MCF 10A (cell line): ENCODE measurements at regions of chr2 and their contacts with region 1.

Region 1: DNA sequence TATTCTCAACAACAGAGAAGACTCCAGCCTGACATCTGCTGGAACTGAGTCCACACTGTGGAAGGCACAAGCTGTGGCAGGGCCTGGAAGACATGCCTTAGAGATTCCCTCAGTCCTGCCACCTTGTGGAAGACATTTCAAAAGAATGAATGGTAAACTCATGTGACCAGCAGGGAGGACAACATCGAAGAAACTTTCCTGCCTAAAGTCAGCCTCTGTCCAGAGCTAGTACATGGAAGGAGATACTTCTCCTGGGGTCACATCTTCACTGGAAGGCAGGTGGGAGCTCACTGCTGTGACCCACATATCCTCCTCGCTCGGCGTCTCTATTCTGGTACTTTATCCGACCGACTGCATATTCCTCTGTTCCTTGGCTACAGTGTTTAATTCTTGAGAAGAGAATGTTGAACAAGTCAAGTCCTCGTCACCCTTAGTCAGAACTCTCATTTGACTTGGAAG is 59.5 kb downstream of the PUM2 start:
- DNase-seq: peak; percentile 88
- H3K4me3 Mint-ChIP-seq: no peak overlapping the region
- H3K27ac Mint-ChIP-seq: peak overlapping the region; percentile 9
- H3K4me1 Mint-ChIP-seq: peaks cover 6% of the 10 kb centered on the region
- H3K27me3 Mint-ChIP-seq: no peaks in the 10 kb centered on the region
- CTCF ChIP-seq: peak; percentile 64

Region 2: DNA sequence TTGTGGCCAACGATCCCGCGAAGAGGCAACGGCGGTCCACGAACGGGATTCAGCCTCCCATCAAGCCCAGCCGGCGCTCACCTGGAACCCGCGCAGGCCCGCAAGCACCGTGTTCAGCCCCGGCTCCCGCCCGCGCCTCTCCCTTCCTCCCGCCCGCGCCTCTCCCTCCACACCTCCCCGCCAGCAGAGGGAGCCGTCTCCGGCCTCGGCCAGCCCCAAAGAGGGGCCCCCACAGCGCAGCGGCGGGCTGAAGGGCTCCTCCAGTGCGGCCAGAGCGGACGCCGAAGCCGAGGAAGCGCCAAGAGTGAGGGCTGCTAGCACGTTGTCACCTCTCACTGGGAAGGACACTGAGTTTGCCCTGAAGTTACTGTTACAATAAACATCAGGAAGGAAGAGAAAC is 184.4 kb before region 1 on chr2:
- CTCF ChIA-PET with region 1: interaction called, 78 read pairs
- POLR2A ChIA-PET with region 1: interaction called, 3 read pairs
- intact Hi-C with region 1: loop called (anchors 1 kb)
- DNase-seq: peak; percentile 45
- H3K4me3 Mint-ChIP-seq: peak overlapping the region; percentile 68
- H3K27ac Mint-ChIP-seq: peak overlapping the region; percentile 40
- H3K4me1 Mint-ChIP-seq: peaks cover 17% of the 10 kb centered on the region
- H3K27me3 Mint-ChIP-seq: no peaks in the 10 kb centered on the region
- CTCF ChIP-seq: peak; percentile 40

Region 3: DNA sequence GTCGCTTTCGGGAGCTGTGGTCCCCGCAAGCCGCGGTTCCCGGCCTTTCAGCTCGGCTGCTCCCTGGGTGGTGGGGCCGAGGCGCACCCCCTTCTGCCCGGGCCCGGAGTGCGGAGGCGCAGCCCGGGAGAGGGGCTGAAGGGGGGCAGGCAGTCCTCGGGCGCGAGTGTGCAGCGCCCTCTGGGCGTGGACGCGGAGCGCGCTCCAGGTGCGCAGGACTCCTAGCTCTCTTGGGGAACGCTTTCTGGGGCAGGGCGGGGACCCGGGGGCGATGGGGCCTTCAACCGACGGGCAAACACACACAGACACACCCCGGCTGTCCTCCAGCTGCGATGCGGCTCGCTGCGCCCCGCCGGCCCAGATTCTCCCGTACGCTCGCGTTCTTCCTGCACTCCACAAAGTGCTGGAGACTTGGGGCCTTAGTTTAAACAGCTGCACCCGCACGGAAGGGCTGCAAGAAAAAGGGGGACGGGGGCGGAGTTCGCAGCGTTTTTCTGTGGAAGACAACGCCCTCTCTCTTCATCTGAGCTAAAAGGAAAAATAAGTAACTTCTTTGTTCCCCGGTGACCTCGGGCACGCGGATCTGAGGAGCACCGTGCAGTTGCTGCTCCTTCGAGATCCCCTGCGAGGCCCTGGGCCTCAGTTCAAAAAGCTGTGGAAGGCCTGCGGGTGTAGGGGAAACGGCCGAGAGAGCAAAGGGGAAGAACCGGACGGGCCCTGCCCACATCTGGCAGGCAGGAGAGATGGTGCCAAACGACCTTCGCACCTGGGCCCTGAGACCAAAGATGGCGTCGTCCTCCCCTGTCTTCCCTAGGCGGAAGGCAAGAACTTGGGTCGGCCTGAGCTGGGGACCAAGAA is 65.6 kb before region 1 on chr2:
- CTCF ChIA-PET with region 1: interaction called, 26 read pairs
- POLR2A ChIA-PET with region 1: interaction called, 3 read pairs
- intact Hi-C with region 1: loop called (anchors 1 kb)
- DNase-seq: peak; percentile 81
- H3K4me3 Mint-ChIP-seq: peak overlapping the region; percentile 75
- H3K27ac Mint-ChIP-seq: peak overlapping the region; percentile 59
- H3K4me1 Mint-ChIP-seq: peaks cover 25% of the 10 kb centered on the region
- H3K27me3 Mint-ChIP-seq: no peaks in the 10 kb centered on the region
- CTCF ChIP-seq: peak; percentile 79

Region 4: DNA sequence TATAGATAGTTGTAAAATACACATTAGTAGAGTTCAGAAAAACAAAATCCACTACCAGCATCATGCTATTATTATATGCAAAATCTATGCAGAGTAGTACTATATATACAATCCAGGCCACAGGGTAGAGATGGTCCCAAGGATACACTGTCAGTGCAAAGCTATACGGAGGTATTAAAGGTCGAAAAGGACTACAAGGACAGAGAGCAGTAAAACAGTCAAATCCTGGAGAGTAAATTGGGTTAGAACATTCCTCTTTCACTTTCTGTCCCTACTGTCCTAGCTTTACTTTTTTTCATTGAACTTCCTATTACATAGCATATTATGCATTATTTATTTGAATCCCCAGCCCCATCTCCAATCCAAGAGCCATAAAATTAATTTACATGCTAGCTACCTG is 26.5 kb before region 1 on chr2:
- CTCF ChIA-PET with region 1: interaction called, 14 read pairs
- POLR2A ChIA-PET with region 1: interaction called, 3 read pairs
- intact Hi-C with region 1: no loop called
- DNase-seq: no peak
- H3K4me3 Mint-ChIP-seq: no peak overlapping the region
- H3K27ac Mint-ChIP-seq: no peak overlapping the region
- H3K4me1 Mint-ChIP-seq: no peaks in the 10 kb centered on the region
- H3K27me3 Mint-ChIP-seq: no peaks in the 10 kb centered on the region
- CTCF ChIP-seq: no peak

Region 5: GRCh38 chr2:20313659-20314058 is 22.5 kb after region 1 on chr2:
- CTCF ChIA-PET with region 1: interaction called, 16 read pairs
- POLR2A ChIA-PET with region 1: interaction called, 3 read pairs
- intact Hi-C with region 1: no loop called
- DNase-seq: peak; percentile 26
- H3K4me3 Mint-ChIP-seq: no peak overlapping the region
- H3K27ac Mint-ChIP-seq: no peak overlapping the region
- H3K4me1 Mint-ChIP-seq: no peaks in the 10 kb centered on the region
- H3K27me3 Mint-ChIP-seq: no peaks in the 10 kb centered on the region
- CTCF ChIP-seq: no peak

Region 6: DNA sequence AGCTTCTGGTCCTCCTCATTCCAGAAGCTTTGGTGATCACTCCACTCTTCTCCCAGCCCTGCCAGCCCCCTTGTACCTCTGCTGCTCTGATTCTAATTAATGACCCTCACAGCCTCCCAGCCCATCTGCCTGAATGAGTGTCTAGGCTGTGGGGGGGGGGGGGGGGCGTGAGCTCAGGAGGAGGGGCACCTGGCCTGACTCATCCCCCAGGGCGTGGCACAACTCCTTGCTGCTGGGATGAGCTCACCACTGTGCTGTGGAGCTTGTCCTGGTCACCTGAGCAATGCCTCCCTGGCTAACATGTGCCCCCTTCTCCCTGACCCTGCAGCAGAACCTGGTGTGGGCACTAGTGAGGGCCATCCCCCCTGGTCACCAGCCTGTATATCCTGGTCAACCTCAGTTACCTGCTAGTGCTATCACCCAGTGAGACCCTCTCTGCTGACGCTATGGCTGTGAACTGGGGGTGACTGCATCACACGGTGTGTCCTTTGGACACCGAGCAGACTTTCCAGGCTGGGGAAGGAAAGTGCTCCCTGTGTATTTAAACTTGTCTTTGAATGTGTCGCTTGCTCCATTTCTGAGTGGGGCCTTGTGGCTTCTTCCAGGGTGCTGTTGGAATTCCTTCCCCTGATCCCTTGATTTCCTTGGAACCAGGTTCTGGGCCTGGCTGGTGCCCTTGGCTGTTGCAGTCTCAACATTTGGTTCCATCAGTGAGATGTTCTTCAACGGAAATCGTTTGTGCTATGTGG is 101.0 kb after region 1 on chr2:
- CTCF ChIA-PET with region 1: no interaction called
- POLR2A ChIA-PET with region 1: no interaction called
- intact Hi-C with region 1: no loop called
- DNase-seq: peak; percentile 61
- H3K4me3 Mint-ChIP-seq: no peak overlapping the region
- H3K27ac Mint-ChIP-seq: no peak overlapping the region
- H3K4me1 Mint-ChIP-seq: peaks cover 11% of the 10 kb centered on the region
- H3K27me3 Mint-ChIP-seq: no peaks in the 10 kb centered on the region
- CTCF ChIP-seq: no peak